Calu3 (cell line): ENCODE measurements at regions of chr14 and their contacts with region 1.

Region 1: GRCh38 chr14:23478111-23478759 is 8.7 kb downstream of the NGDN start:
- DNase-seq: peak; percentile 76
- H3K4me3 Mint-ChIP-seq: no peak overlapping the region
- H3K27ac Mint-ChIP-seq: no peak overlapping the region
- H3K4me1 Mint-ChIP-seq: no peaks in the 10 kb centered on the region
- H3K27me3 Mint-ChIP-seq: no peaks in the 10 kb centered on the region
- CTCF ChIP-seq: peak; percentile 40

Region 2: GRCh38 chr14:23269193-23269592 is 209.0 kb before region 1 on chr14:
- CTCF ChIA-PET with region 1: no interaction called
- intact Hi-C with region 1: loop called (anchors 10 kb)
- DNase-seq: no peak
- H3K4me3 Mint-ChIP-seq: no peak overlapping the region
- H3K27ac Mint-ChIP-seq: no peak overlapping the region
- H3K4me1 Mint-ChIP-seq: no peaks in the 10 kb centered on the region
- H3K27me3 Mint-ChIP-seq: peaks cover 29% of the 10 kb centered on the region
- CTCF ChIP-seq: no peak

Region 3: DNA sequence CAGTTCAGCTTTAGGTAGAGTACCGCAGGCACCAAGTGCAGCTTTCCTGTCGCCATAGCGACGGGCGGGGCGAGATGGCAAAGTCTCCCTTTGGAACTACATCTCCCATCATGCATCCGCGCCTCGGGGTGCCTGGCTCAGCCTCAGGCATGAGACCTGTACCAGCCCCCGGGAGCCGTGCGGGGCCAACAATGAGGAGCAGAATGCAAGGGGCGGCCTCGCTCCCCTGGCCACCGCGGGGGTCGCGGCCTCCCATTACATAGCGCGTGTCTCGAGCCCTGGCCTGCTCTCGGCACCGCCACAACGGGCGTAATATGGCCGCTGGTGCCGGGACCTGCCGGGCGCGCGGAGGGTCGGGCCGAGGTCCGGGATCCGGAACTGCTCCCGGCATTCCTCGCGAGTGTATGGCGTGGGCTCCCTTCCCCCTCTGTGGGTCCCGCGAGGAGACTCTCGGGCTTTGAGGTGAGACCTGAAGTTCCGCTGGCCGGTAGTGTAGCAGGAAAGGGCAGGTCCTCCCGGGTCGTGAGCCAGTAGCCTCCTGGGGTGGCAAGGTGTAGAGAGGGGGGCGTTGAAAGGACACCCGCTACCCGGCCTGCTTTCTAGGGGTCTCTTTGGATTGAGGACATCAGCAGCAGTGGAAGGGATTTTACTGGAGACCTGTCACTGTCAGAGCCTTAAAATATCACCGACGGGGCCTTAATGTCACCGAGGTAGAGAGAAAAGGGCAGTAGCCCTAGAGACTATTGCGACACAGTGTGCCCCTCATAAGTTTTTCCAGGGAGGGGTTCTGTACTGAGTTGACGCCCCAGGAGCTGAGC is 77.9 kb after region 1 on chr14 and contains the start of gene THTPA:
- CTCF ChIA-PET with region 1: interaction called, 22 read pairs
- intact Hi-C with region 1: no loop called
- DNase-seq: peak; percentile 89
- H3K4me3 Mint-ChIP-seq: peak within 1 kb of the TSS; percentile 89
- H3K27ac Mint-ChIP-seq: peak within 1 kb of the TSS; percentile 92
- H3K4me1 Mint-ChIP-seq: peaks cover 30% of the 10 kb centered on the region
- H3K27me3 Mint-ChIP-seq: no peaks in the 10 kb centered on the region
- CTCF ChIP-seq: no peak
- total RNA-seq, gene THTPA: 15.4 and 18.3 TPM in 2 replicates

Region 4: GRCh38 chr14:23562268-23563203 is 84.3 kb after region 1 on chr14:
- CTCF ChIA-PET with region 1: interaction called, 22 read pairs
- intact Hi-C with region 1: loop called (anchors 1 kb)
- DNase-seq: peak; percentile 62
- H3K4me3 Mint-ChIP-seq: no peak overlapping the region
- H3K27ac Mint-ChIP-seq: no peak overlapping the region
- H3K4me1 Mint-ChIP-seq: peaks cover 12% of the 10 kb centered on the region
- H3K27me3 Mint-ChIP-seq: no peaks in the 10 kb centered on the region
- CTCF ChIP-seq: peak; percentile 84